CD4-positive, alpha-beta T cell (primary cell): ENCODE measurements at regions of chr20 and their contacts with region 1.

Region 1: GRCh38 chr20:3679749-3680700 is 1.8 kb downstream of the ADAM33 start:
- DNase-seq: no peak
- ATAC-seq: no peak
- H3K4me3 ChIP-seq: no peak overlapping the region
- H3K4me3 Mint-ChIP-seq: no peak overlapping the region
- H3K27ac ChIP-seq: no peak overlapping the region
- H3K27ac Mint-ChIP-seq: no peak overlapping the region
- H3K4me1 ChIP-seq: peaks cover 10% of the 10 kb centered on the region
- H3K4me1 Mint-ChIP-seq: peaks cover 5% of the 10 kb centered on the region
- H3K27me3 ChIP-seq: peaks cover 36 to 45% of the 10 kb centered on the region in 2 experiments
- H3K27me3 Mint-ChIP-seq: peaks cover 65% of the 10 kb centered on the region
- CTCF ChIP-seq: no peak

Region 2: DNA sequence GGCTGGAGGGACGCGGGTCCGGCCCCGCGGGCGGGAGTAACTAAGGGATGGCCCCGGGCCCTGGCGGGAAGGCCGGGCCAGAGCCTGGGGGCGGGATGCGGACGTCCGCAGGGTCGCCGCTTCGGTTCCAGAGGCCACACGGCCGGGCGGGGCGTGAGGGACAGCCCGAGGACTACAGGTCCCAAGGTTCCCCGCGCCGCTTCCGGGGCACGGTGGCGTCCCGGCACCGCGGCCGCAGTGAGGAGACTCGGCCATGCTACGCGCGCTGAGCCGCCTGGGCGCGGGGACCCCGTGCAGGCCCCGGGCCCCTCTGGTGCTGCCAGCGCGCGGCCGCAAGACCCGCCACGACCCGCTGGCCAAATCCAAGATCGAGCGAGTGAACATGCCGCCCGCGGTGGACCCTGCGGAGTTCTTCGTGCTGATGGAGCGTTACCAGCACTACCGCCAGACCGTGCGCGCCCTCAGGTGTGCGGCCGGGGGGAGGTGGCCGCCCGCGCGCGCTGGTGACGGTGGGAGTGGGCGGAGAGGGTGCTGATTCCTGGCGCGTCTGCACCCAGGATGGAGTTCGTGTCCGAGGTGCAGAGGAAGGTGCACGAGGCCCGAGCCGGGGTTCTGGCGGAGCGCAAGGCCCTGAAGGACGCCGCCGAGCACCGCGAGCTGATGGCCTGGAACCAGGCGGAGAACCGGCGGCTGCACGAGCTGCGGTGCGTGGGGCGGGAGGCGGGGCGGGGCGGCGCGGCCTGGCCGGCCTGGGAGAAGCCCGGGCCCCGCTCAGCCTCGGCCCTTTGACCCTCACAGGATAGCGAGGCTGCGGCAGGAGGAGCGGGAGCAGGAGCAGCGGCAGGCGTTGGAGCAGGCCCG is 634.0 kb before region 1 on chr20 and contains the start of gene MRPS26:
- CTCF ChIA-PET with region 1: no interaction called
- POLR2A ChIA-PET with region 1: no interaction called
- intact Hi-C with region 1: no loop called
- DNase-seq: peak; percentile 57 to 87 (median 76)
- ATAC-seq: peak; percentile 86
- H3K4me3 ChIP-seq: peak within 1 kb of the TSS; percentile 76
- H3K4me3 Mint-ChIP-seq: peak within 1 kb of the TSS; percentile 95
- H3K27ac ChIP-seq: peak within 1 kb of the TSS; percentile 48 to 49
- H3K27ac Mint-ChIP-seq: peak within 1 kb of the TSS; percentile 83
- H3K4me1 ChIP-seq: peaks cover 27% of the 10 kb centered on the region
- H3K4me1 Mint-ChIP-seq: peaks cover 21% of the 10 kb centered on the region
- H3K27me3 ChIP-seq: no peaks in the 10 kb centered on the region
- H3K27me3 Mint-ChIP-seq: no peaks in the 10 kb centered on the region
- CTCF ChIP-seq: no peak
- total RNA-seq, gene MRPS26: 19.3 to 22.7 TPM

Region 3: DNA sequence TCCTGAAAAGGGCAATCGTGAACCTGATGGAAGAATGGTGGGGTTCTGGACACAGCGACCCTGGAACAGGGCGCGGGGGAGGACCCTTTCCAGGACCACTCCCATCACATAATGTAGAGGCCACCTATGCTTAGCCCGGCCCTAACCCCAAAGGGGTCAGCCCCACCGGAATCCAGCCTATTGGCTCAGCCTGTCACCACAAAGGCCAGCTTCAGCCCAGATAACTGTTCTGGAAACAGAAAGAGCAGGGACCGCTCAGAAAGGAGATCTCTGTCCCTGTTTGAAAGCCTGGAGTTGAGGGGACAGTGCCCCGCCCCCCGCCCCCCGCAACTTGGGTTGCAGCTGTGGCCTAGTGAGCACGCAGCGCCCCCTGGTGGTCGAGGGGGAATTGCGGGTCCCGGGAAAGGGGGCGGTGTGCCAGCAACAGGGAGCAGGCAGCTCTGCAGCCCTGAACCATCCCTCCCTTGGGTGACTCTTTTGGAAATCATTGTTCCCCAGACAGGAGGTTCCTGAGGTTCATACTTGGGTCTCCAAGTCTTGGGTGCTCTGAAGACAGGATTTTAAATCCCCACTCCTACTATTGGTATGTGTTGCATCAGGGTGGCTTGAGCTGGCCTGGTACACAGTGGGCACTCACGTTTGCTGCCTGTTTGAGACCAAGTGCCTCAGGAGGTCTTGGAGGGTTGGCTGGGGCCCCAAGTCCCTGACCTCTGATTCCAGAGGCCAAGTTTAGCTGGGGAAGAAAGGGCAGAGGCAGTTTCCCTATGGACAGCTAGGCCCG is 30.9 kb after region 1 on chr20:
- CTCF ChIA-PET with region 1: interaction called, 18 read pairs
- POLR2A ChIA-PET with region 1: no interaction called
- intact Hi-C with region 1: no loop called
- DNase-seq: peak; percentile 50 to 82 (median 70)
- ATAC-seq: peak; percentile 61
- H3K4me3 ChIP-seq: no peak overlapping the region
- H3K4me3 Mint-ChIP-seq: no peak overlapping the region
- H3K27ac ChIP-seq: no peak overlapping the region
- H3K27ac Mint-ChIP-seq: no peak overlapping the region
- H3K4me1 ChIP-seq: peaks cover 5% of the 10 kb centered on the region
- H3K4me1 Mint-ChIP-seq: no peaks in the 10 kb centered on the region
- H3K27me3 ChIP-seq: no peaks in the 10 kb centered on the region
- H3K27me3 Mint-ChIP-seq: peaks cover 8% of the 10 kb centered on the region
- CTCF ChIP-seq: peak; percentile 93

Region 4: GRCh38 chr20:3854462-3854871 is 174.4 kb after region 1 on chr20:
- CTCF ChIA-PET with region 1: interaction called, 11 read pairs
- POLR2A ChIA-PET with region 1: interaction called, 3 read pairs
- intact Hi-C with region 1: loop called (anchors 1 to 2 kb)
- DNase-seq: no peak
- ATAC-seq: no peak
- H3K4me3 ChIP-seq: no peak overlapping the region
- H3K4me3 Mint-ChIP-seq: no peak overlapping the region
- H3K27ac ChIP-seq: no peak overlapping the region
- H3K27ac Mint-ChIP-seq: no peak overlapping the region
- H3K4me1 ChIP-seq: peaks cover 9% of the 10 kb centered on the region
- H3K4me1 Mint-ChIP-seq: peaks cover 13% of the 10 kb centered on the region
- H3K27me3 ChIP-seq: no peaks in the 10 kb centered on the region
- H3K27me3 Mint-ChIP-seq: no peaks in the 10 kb centered on the region
- CTCF ChIP-seq: no peak

Region 5: DNA sequence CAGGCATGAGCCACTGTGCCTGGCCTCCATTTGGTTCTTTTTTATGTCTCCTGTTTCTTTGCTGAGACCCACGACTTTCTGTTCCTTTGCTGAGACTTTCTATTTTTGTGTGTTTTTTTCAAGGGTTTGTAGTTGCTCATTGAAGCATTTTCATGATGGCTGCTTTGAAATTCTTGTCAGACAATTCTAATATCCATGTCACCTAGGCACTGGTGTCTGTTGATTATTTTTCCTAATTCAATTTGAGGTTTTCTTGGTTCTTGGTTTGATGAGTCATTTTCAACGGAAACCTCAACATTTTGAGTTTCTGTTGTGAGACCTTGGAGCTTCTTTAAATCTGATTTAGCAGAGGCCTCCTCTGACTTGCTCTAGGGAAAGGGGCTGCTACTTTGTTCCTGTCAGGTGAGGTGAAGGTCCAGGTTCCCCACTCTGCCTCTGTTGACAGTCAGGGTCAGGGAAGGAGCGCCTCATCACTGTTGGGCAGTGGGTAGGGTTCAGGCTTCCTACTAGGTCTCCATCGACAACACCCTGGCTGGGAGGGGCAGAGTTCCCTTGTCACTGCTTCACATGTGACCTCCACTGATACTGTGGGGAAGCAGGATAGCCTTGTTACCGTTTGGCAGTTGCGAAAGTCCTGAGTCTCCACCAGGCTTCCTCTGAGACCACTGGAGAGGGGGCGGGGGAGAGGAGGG is 402.5 kb after region 1 on chr20:
- CTCF ChIA-PET with region 1: interaction called, 5 read pairs
- POLR2A ChIA-PET with region 1: interaction called, 5 read pairs
- intact Hi-C with region 1: loop called (anchors 2 kb)
- DNase-seq: peak; percentile 15 to 80 (median 38)
- ATAC-seq: peak; percentile 69
- H3K4me3 ChIP-seq: peak overlapping the region; percentile 28
- H3K4me3 Mint-ChIP-seq: peak overlapping the region; percentile 0
- H3K27ac ChIP-seq: peak overlapping the region in 1 of 2 donors; percentile 72
- H3K27ac Mint-ChIP-seq: peak overlapping the region; percentile 72
- H3K4me1 ChIP-seq: peaks cover 38% of the 10 kb centered on the region
- H3K4me1 Mint-ChIP-seq: peaks cover 42% of the 10 kb centered on the region
- H3K27me3 ChIP-seq: no peaks in the 10 kb centered on the region
- H3K27me3 Mint-ChIP-seq: no peaks in the 10 kb centered on the region
- CTCF ChIP-seq: no peak

Region 6: DNA sequence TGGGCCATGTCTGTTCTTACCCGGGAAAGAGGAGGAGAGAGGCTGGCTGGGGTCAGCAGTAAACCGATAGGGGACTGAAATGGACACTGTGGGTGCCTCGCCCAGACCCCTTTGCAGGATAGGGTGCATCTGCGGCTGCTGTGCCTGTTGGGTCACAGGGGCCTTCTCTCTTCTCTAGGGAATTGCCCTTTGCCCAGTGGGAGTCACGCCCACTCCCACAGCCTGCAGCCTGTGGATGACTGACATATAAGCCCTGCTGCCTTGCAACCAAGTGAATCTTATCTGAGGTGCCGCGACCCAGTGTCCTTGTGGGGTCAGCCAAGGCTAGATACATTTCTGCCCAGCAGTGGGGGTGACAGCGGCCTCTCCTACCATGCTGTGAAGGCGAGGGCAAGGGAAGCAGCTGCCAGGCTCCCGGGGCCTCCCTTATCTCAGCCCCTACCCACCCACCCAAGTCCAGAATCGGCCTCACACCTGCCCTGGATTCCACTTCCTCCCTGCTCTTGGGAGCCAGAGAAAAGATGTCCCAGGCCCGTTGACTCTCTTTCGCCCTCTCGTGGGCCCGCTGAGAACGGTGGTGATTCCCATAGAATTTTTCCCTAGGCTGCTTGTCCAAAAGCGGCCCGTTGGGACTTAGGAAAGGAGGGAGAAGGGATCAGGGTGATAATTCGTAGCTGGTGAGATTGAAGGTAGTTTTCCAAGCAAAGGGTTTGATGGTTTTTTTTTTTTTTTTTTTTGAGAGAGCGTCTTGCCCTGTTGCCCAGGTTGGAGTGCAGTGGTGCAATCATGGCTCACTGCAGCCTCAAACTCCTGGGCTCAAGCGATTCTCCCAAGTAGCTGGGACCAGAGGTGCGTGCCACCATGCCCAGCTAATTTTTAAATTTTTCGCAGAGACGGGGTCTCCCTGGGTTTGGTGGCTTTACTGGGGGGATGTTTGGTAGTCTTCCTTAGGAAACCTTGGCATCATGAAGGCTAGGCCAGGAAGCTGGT is 411.8 kb after region 1 on chr20:
- CTCF ChIA-PET with region 1: no interaction called
- POLR2A ChIA-PET with region 1: no interaction called
- intact Hi-C with region 1: loop called in 1 of 2 experiments (anchors 2 kb)
- DNase-seq: peak in 10 of 14 experiments; percentile 22 to 65 (median 42)
- ATAC-seq: no peak
- H3K4me3 ChIP-seq: no peak overlapping the region
- H3K4me3 Mint-ChIP-seq: no peak overlapping the region
- H3K27ac ChIP-seq: no peak overlapping the region
- H3K27ac Mint-ChIP-seq: no peak overlapping the region
- H3K4me1 ChIP-seq: no peaks in the 10 kb centered on the region
- H3K4me1 Mint-ChIP-seq: no peaks in the 10 kb centered on the region
- H3K27me3 ChIP-seq: no peaks in the 10 kb centered on the region
- H3K27me3 Mint-ChIP-seq: peaks cover 16% of the 10 kb centered on the region
- CTCF ChIP-seq: peak; percentile 59

Region 7: DNA sequence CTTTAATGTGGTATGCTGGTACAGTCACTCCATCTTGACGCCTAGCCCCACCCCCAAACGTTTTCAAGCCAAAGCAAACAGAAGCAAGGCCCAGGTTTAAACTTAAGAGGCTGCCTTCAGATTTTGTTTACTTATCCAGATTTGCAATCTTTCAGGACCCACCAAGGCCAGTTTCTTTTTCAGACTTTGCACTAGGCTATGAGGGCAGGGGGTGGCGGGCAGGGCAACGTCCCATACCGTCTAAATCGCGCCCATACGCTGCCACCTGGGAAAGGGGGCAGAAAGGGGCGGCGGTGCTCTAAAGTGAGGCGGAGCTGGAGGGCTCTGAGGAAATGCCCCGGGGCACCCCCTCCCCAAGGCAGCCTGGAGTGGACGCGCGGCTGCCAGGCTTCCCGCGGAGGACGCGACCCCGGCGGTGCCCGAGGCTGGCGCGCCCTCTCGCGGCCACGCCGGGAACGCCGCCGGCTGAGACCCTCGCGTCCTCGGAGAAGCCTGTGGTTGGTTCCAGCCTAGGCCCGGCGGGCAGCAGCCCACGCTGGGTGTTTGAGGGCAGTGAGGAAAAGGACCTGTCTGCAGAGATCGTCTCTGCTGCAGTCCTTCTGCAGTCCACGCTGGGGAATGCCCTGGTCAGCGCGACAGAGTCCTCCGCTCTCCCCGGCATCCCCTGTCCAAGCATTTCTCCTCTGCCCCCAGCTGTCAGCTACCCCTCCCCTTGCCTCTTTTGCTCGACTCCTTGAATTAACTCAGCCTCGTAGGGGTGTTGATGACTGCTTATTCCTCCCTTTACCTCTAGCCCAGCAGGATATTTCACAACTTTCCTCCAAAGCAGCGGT is 912.5 kb after region 1 on chr20:
- CTCF ChIA-PET with region 1: no interaction called
- POLR2A ChIA-PET with region 1: no interaction called
- intact Hi-C with region 1: loop called in 1 of 2 experiments (anchors 5 kb)
- DNase-seq: peak in 13 of 14 experiments; percentile 21 to 74 (median 45)
- ATAC-seq: peak; percentile 76
- H3K4me3 ChIP-seq: peak overlapping the region; percentile 55
- H3K4me3 Mint-ChIP-seq: peak overlapping the region; percentile 83
- H3K27ac ChIP-seq: no peak overlapping the region
- H3K27ac Mint-ChIP-seq: no peak overlapping the region
- H3K4me1 ChIP-seq: peaks cover 14% of the 10 kb centered on the region
- H3K4me1 Mint-ChIP-seq: peaks cover 7% of the 10 kb centered on the region
- H3K27me3 ChIP-seq: peaks cover 0 to 7% of the 10 kb centered on the region in 2 experiments
- H3K27me3 Mint-ChIP-seq: peaks cover 27% of the 10 kb centered on the region
- CTCF ChIP-seq: peak; percentile 93